HCT116 (cell line): ENCODE measurements at regions of chr13 and their contacts with region 1.

Region 1: GRCh38 chr13:108827636-108828035 is 198.2 kb downstream of the MYO16 start:
- DNase-seq: no peak
- ATAC-seq: no peak
- H3K4me3 ChIP-seq: no peak overlapping the region
- H3K27ac ChIP-seq: no peak overlapping the region
- H3K4me1 ChIP-seq: peaks cover 0 to 13% of the 10 kb centered on the region in 2 experiments; a peak in 2 of 4 replicates
- H3K27me3 ChIP-seq: no peaks in the 10 kb centered on the region
- CTCF ChIP-seq: no peak
- POLR2A ChIP-seq: no peak
- RAD21 ChIP-seq: no peak

Region 2: DNA sequence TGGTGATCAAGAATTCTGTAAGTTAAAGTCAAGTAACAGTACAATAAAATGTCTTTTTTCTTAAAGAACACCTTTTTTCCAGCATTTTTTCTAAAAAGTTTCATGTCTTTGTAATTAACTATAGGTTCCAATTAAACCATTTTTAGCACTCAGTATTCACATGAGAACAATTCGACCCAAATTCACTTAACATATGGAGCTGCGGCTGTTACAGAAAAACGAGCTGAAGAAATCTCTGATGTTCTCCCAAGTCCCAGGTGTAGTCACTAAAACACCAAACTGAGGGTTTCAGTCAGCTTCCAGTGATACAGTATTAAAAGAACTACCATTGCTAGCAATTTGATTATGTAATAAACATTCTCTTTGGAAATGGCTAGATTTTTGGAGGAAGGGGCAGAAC is 440.5 kb before region 1 on chr13:
- CTCF ChIA-PET with region 1: no interaction called
- POLR2A ChIA-PET with region 1: no interaction called
- RAD21 ChIA-PET with region 1: no interaction called
- intact Hi-C with region 1: no loop called
- DNase-seq: no peak
- ATAC-seq: no peak
- H3K4me3 ChIP-seq: no peak overlapping the region
- H3K27ac ChIP-seq: no peak overlapping the region
- H3K4me1 ChIP-seq: no peaks in the 10 kb centered on the region
- H3K27me3 ChIP-seq: no peaks in the 10 kb centered on the region
- CTCF ChIP-seq: no peak
- POLR2A ChIP-seq: no peak
- RAD21 ChIP-seq: no peak

Region 3: GRCh38 chr13:108813771-108814170 is 13.9 kb before region 1 on chr13:
- CTCF ChIA-PET with region 1: no interaction called
- POLR2A ChIA-PET with region 1: no interaction called
- RAD21 ChIA-PET with region 1: no interaction called
- intact Hi-C with region 1: loop called (anchors 1 kb)
- DNase-seq: no peak
- ATAC-seq: no peak
- H3K4me3 ChIP-seq: no peak overlapping the region
- H3K27ac ChIP-seq: no peak overlapping the region
- H3K4me1 ChIP-seq: no peaks in the 10 kb centered on the region
- H3K27me3 ChIP-seq: no peaks in the 10 kb centered on the region
- CTCF ChIP-seq: no peak
- POLR2A ChIP-seq: no peak
- RAD21 ChIP-seq: no peak

Region 4: DNA sequence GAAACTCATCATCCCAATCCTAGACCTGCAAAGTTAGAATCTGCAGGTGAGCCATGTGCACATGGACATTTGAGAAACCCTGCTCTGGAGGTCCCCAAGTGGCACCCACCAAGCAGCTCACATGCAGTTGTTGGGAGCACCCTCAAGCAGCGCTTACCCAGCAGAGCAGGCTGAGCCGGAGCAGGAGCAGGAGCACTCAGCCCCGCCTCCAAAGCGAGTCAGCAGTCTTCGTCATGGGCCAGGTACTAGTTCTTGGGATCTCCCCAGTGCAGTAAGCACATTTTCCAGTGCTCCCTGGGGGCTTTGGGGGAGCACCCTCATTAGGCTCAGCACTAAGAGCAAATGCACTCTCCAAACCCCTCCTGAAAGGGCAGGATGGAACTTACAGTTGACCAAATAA is 386.1 kb after region 1 on chr13:
- CTCF ChIA-PET with region 1: no interaction called
- POLR2A ChIA-PET with region 1: no interaction called
- RAD21 ChIA-PET with region 1: no interaction called
- intact Hi-C with region 1: no loop called
- DNase-seq: no peak
- ATAC-seq: peak; percentile 69
- H3K4me3 ChIP-seq: no peak overlapping the region
- H3K27ac ChIP-seq: no peak overlapping the region
- H3K4me1 ChIP-seq: peaks cover 24 to 69% of the 10 kb centered on the region in 2 experiments
- H3K27me3 ChIP-seq: no peaks in the 10 kb centered on the region
- CTCF ChIP-seq: no peak
- POLR2A ChIP-seq: no peak
- RAD21 ChIP-seq: no peak